Right cardiac atrium (tissue), 5 donors: ENCODE measurements at regions of chr12 and their contacts with region 1.

Region 1: GRCh38 chr12:91361864-91362263 is 179.2 kb upstream of the DCN start:
- DNase-seq: no peak
- ATAC-seq: no peak
- H3K4me3 ChIP-seq: no peak overlapping the region
- H3K27ac ChIP-seq: no peak overlapping the region
- H3K4me1 ChIP-seq: no peaks in the 10 kb centered on the region
- H3K27me3 ChIP-seq: no peaks in the 10 kb centered on the region

Region 2: DNA sequence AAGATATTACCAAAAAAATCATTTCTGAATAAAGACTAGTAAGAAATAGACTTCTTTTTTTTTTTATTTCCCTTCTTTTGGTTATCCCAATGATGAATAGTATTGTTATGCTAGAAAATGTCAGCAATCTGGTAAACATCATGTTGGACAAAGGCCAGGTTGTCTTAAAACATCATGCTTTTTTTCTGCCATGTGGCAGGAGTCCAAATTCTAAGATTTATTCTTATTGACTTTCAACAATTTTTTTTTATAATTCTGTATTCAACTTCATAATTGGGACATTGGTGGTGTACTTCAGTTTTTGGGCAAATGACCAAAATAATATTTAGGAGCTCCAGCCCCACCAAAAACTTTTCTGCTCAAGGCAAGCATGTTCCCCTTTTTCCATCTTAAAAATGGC is 189.8 kb before region 1 on chr12:
- intact Hi-C with region 1: no loop called
- DNase-seq: no peak
- ATAC-seq: no peak
- H3K4me3 ChIP-seq: peak overlapping the region; percentile 15
- H3K27ac ChIP-seq: no peak overlapping the region
- H3K4me1 ChIP-seq: peaks cover 2% of the 10 kb centered on the region
- H3K27me3 ChIP-seq: no peaks in the 10 kb centered on the region

Region 3: GRCh38 chr12:92649511-92650227 is 1287.8 kb after region 1 on chr12:
- intact Hi-C with region 1: loop called in 2 of 4 experiments (anchors 5 kb)
- DNase-seq: peak in 2 of 3 donors; percentile 36 to 50
- ATAC-seq: peak; percentile 94
- H3K4me3 ChIP-seq: no peak overlapping the region
- H3K27ac ChIP-seq: no peak overlapping the region
- H3K4me1 ChIP-seq: no peaks in the 10 kb centered on the region
- H3K27me3 ChIP-seq: no peaks in the 10 kb centered on the region